ENCODE measurements at regions of chr5 and their contacts with region 1.

Region 1: DNA sequence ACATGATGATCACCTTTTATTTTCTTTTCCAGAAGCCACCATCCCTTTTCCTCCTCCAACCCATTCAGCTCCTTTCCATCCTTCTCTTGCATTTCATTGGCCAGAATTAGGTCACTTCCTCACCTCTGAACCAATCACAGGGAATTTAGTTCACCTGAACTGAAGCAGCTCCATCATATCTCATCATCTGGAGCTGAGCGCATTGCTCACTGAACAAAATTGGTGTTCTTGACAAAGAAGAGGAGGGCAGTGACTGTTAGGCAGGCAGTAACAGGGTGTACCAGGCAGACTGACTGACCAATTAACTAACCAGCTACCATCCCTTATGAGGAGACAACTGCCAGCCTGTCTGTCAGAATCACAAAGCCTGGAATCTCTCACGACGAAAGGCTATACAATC is 1.8 kb upstream of the ZNF354A start:
- DNase-seq: no peak
- H3K4me3 ChIP-seq: no peak overlapping the region
- H3K27ac ChIP-seq: no peak overlapping the region
- H3K4me1 ChIP-seq: peaks cover 2% of the 10 kb centered on the region
- H3K27me3 ChIP-seq: no peaks in the 10 kb centered on the region
- CTCF ChIP-seq: no peak
- EP300 ChIP-seq: no peak
- POLR2A ChIP-seq: no peak

Region 2: GRCh38 chr5:179060116-179061008 is 328.1 kb after region 1 on chr5 and contains the start of gene ZNF354C:
- intact Hi-C with region 1: loop called in 2 of 4 experiments (anchors 2 to 10 kb)
- DNase-seq: peak; percentile 86 to 93 (median 90)
- H3K4me3 ChIP-seq: peak within 1 kb of the TSS; percentile 96
- H3K27ac ChIP-seq: peak within 1 kb of the TSS; percentile 43 to 71
- H3K4me1 ChIP-seq: peaks cover 3% of the 10 kb centered on the region
- H3K27me3 ChIP-seq: no peaks in the 10 kb centered on the region
- CTCF ChIP-seq: no peak
- EP300 ChIP-seq: no peak
- POLR2A ChIP-seq: no peak
- total RNA-seq, gene ZNF354C: 4.9 to 11.8 (median 10.0) TPM

Region 3: DNA sequence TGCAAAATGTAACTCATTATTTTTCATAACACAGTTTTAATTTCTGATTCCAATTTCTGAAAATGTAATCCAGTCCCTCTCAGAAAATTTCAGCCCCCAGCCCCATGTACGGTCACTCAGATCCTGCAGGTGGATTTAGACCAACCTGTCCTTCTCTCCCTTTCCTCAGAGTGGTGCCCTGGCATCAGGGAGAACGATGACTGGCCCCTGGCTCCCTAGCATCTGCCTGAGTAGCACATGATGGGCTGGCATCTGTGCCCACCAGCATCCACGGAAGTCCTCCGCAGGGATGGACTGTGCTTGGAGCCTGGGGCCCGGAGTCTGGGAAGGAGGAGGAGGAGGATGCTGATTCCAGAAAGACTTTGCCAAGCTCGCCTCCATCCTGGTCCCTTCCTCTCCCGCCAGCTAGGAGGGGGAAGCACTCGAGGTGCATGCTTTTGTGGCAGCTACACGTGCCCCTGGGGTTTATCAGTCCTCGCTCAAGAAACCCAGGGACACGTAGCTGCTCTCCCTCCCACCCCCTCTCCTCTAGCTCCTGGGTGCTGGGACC is 763.7 kb after region 1 on chr5:
- intact Hi-C with region 1: loop called in 1 of 4 experiments (anchors 10 kb)
- DNase-seq: no peak
- H3K4me3 ChIP-seq: no peak overlapping the region
- H3K27ac ChIP-seq: no peak overlapping the region
- H3K4me1 ChIP-seq: no peaks in the 10 kb centered on the region
- H3K27me3 ChIP-seq: no peaks in the 10 kb centered on the region
- CTCF ChIP-seq: no peak
- EP300 ChIP-seq: no peak
- POLR2A ChIP-seq: no peak